ENCODE measurements at regions of chr7 and their contacts with region 1.

Region 1: DNA sequence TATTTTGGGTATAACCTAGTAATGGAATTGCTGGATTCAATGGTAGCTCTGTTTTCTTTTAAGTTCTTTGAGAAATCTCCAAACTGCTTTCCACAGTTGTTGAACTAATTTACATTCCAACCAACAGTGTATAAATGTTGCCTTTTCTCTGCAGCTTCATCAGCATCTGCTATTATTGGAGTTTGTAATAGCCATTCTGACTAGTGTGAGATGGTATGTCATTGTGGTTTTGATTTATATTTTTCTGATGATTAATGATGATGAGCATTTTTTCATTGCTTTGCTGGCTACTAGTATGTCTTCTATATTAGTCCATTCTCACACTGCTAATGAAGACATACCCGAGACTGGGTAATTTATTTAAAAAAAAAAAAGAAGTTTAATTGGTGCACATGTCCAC is 248.6 kb upstream of the MAGI2 start:
- DNase-seq: no peak

Region 2: GRCh38 chr7:79598351-79598750 is 103.8 kb before region 1 on chr7:
- intact Hi-C with region 1: no loop called
- DNase-seq: no peak

Region 3: DNA sequence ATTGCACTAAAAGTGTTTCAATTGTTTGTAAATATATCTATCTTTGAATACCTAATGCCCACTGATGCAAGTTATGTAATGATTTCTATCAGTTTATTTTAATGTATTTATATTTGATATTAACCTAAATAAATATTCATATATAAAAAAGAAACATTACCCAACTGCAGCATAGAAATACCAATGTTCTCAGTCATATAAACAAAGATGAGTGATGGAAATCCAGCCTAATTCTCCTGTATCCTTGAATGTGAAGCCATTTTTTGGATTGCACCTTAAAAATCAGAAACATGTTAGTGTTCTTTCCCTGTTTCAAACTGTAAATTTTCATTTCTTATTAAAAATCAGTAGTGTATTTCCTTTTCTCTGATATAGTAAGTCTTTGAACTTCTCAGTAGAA is 126.8 kb after region 1 on chr7:
- intact Hi-C with region 1: loop called in 1 of 2 experiments (anchors 5 kb)
- DNase-seq: no peak

Region 4: GRCh38 chr7:79854621-79855020 is 152.5 kb after region 1 on chr7:
- intact Hi-C with region 1: no loop called
- DNase-seq: no peak

Measured in posterior vena cava (tissue), 2 donors.